ENCODE measurements at regions of chr2 and their contacts with region 1.

Region 1: DNA sequence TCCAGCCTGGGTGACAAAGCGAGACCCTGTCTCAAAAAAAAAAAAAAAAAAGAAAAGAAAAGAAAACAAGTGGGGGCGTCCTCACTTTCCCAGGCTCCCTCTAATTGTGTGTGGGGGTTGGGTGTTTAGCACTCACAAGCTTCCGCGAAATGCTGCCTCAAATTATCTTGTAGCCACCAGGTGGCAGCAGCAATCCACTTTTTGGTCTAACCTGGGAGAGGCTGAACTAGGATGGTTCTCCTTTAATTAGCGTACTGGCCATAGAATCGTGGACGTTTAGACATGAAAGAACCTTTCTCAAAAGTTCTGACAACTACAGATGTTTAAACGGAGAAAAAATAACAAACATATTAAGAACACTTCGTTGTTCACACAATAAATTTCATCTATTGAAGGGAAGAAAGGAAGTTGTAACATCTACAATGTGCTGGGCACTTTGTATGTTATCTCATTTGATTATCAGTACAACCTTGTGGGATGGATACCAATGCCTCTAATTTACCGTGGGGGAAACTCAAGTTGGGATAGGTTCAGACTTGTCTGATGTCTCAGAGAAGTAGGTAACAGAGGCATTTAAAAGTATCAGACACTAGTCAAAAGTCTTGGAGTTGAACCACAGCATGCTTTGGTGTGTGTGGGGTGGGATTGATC is 122.7 kb upstream of the NABP1 start:
- DNase-seq: peak; percentile 40 to 78 (median 66)
- ATAC-seq: peak; percentile 89
- H3K4me3 ChIP-seq: no peak overlapping the region
- H3K4me3 Mint-ChIP-seq: peak overlapping the region in 4 of 10 donors; percentile 23 to 64 (median 43)
- H3K27ac ChIP-seq: no peak overlapping the region
- H3K27ac Mint-ChIP-seq: no peak overlapping the region
- H3K4me1 ChIP-seq: no peaks in the 10 kb centered on the region
- H3K4me1 Mint-ChIP-seq: peaks cover 0 to 5% (median 3%) of the 10 kb centered on the region in 7 donors
- H3K27me3 ChIP-seq: no peaks in the 10 kb centered on the region
- H3K27me3 Mint-ChIP-seq: peaks cover 13 to 34% (median 18%) of the 10 kb centered on the region in 5 donors

Region 2: GRCh38 chr2:191625016-191625415 is 69.8 kb after region 1 on chr2:
- CTCF ChIA-PET with region 1: no interaction called
- POLR2A ChIA-PET with region 1: no interaction called
- intact Hi-C with region 1: no loop called
- DNase-seq: peak in 6 of 9 donors; percentile 26 to 68 (median 64)
- ATAC-seq: peak; percentile 90
- H3K4me3 ChIP-seq: no peak overlapping the region
- H3K4me3 Mint-ChIP-seq: peak overlapping the region in 7 of 10 donors; percentile 7 to 52 (median 42)
- H3K27ac ChIP-seq: no peak overlapping the region
- H3K27ac Mint-ChIP-seq: peak overlapping the region in 8 of 9 donors; percentile 65 to 90 (median 82)
- H3K4me1 ChIP-seq: peaks cover 18 to 25% of the 10 kb centered on the region in 2 donors
- H3K4me1 Mint-ChIP-seq: peaks cover 32 to 77% (median 59%) of the 10 kb centered on the region in 7 donors
- H3K27me3 ChIP-seq: no peaks in the 10 kb centered on the region
- H3K27me3 Mint-ChIP-seq: peaks cover 0 to 2% (median 0%) of the 10 kb centered on the region in 5 donors

Region 3: DNA sequence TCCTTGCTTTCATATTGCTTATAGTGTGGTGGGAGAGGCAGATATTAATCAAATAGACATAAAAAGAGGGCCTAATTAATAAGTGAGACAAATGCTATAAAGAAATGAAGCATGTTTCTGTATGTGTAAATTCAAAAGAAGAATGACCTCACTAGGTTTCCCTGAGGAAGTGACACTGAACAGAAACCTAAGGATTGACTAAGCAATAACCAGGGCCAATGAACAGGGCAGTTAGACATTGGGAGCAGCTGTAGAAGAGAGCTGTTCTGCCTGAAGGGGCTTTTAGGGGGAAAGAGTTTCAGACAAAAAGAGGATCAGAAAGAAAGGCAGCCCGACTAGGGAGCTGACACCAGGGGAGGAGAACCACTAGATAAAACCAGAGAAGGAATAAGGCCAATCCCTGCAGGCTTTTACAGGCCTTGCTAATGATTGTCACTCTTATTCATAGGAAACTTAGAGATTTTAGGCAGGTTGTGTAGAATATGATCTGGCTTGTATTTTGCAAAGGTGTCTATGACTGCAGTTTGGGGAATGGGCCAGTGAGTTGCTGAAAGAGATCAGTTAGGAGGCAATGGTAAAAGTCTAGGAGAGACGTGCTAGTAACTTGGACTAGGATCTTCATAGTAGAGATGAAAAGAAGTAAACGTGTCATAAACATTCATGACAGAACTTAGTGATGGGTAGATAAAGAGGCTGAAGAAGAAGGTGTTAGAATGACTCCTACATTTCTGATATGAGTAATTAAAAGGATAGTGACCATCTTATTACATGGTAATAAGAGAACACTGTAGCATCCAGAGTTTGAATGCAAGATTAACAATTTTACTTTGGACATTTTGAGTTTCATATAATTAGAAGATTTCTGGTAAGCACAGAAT is 95.9 kb after region 1 on chr2:
- CTCF ChIA-PET with region 1: no interaction called
- POLR2A ChIA-PET with region 1: no interaction called
- intact Hi-C with region 1: no loop called
- DNase-seq: no peak
- ATAC-seq: peak; percentile 54
- H3K4me3 ChIP-seq: no peak overlapping the region
- H3K4me3 Mint-ChIP-seq: no peak overlapping the region
- H3K27ac ChIP-seq: no peak overlapping the region
- H3K27ac Mint-ChIP-seq: peak overlapping the region in 1 of 9 donors; percentile 19
- H3K4me1 ChIP-seq: no peaks in the 10 kb centered on the region
- H3K4me1 Mint-ChIP-seq: peaks cover 0 to 6% (median 0%) of the 10 kb centered on the region in 7 donors
- H3K27me3 ChIP-seq: no peaks in the 10 kb centered on the region
- H3K27me3 Mint-ChIP-seq: peaks cover 0 to 2% (median 0%) of the 10 kb centered on the region in 5 donors

Region 4: DNA sequence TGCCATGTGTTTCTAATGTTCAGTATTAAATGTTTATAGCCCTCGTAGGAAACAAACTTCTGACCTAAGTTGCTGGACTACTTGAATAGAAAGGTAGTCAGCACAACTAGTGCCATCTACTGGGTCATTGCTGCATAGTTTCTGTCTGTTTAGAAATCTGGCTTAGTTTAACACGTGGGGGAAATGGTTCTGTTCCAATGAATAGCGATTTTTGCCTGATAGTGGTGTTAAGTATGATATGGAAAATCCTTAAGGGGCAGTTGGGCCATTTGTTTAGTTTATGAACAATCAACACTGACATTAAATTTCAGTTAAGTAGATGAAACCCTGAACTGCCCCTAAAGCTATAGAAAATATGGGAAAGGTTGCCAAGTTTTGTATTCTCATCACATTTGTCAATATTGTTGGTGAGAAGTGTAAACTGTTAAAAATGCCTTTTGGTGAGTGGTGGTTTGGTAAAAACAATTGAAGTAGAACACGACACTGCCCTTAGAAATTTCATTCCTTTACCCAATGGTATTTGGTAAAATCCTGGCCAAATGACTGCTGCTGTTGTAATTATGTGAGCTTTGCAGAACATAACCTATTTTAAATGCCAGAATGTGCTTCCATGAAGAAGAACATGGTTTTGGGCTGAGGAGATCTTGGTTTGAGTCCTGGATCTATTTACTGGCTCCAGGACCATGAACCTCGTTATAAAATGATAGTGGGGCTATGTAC is 136.0 kb after region 1 on chr2:
- CTCF ChIA-PET with region 1: interaction called, 6 read pairs
- POLR2A ChIA-PET with region 1: no interaction called
- intact Hi-C with region 1: loop called (anchors 1 kb)
- DNase-seq: peak in 7 of 9 donors; percentile 44 to 69 (median 61)
- ATAC-seq: peak; percentile 93
- H3K4me3 ChIP-seq: no peak overlapping the region
- H3K4me3 Mint-ChIP-seq: no peak overlapping the region
- H3K27ac ChIP-seq: no peak overlapping the region
- H3K27ac Mint-ChIP-seq: peak overlapping the region in 5 of 9 donors; percentile 31 to 61 (median 44)
- H3K4me1 ChIP-seq: peaks cover 3 to 11% of the 10 kb centered on the region in 2 donors
- H3K4me1 Mint-ChIP-seq: peaks cover 8 to 28% (median 15%) of the 10 kb centered on the region in 7 donors
- H3K27me3 ChIP-seq: no peaks in the 10 kb centered on the region
- H3K27me3 Mint-ChIP-seq: no peaks in the 10 kb centered on the region

Region 5: DNA sequence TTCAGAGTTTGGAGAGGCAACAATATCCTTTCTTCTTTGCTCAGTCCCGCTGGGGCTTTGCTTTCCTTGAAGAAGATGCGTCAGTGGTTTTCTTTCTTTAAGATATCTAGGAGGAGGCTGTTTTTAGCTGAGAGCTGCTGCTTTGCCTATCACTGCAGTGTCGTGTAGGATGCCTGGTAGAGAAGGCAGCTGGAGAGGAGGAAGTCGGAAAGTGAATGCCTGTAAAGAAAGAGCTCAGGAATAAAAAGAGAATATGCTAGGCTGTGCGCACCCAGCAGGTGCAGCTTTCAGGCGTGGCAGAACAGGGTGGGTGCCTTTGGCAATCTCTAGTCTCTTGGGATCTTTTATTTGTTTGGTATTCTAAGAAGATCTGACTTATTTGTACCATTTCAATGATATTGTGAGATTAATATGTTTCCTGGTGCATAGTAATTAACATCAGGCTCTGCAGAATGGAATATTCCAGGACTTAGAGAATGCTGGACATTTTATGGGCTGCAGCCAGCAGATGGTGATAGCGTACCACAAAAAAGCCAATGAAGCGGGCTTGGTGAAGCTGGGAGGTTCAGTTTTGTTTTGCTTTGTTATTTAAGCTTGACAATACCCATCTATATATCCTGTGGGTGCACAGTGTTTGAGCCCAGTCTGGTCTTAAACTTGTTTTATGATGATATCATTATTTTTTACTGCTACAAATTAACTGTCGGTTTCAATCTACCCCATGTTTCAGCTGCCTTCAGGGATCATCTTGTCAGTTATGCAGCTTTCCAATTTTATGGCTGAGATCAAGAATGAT is 256.8 kb after region 1 on chr2:
- CTCF ChIA-PET with region 1: interaction called, 5 read pairs
- POLR2A ChIA-PET with region 1: no interaction called
- intact Hi-C with region 1: loop called in 1 of 2 experiments (anchors 1 kb)
- DNase-seq: peak in 5 of 9 donors; percentile 3 to 22 (median 11)
- ATAC-seq: peak; percentile 57
- H3K4me3 ChIP-seq: no peak overlapping the region
- H3K4me3 Mint-ChIP-seq: no peak overlapping the region
- H3K27ac ChIP-seq: no peak overlapping the region
- H3K27ac Mint-ChIP-seq: no peak overlapping the region
- H3K4me1 ChIP-seq: no peaks in the 10 kb centered on the region
- H3K4me1 Mint-ChIP-seq: no peaks in the 10 kb centered on the region
- H3K27me3 ChIP-seq: no peaks in the 10 kb centered on the region
- H3K27me3 Mint-ChIP-seq: peaks cover 4 to 34% (median 22%) of the 10 kb centered on the region in 5 donors

Region 6: GRCh38 chr2:192286093-192286701 is 731.0 kb after region 1 on chr2:
- CTCF ChIA-PET with region 1: no interaction called
- POLR2A ChIA-PET with region 1: no interaction called
- intact Hi-C with region 1: loop called (anchors 5 to 10 kb)
- DNase-seq: no peak
- ATAC-seq: no peak
- H3K4me3 ChIP-seq: no peak overlapping the region
- H3K4me3 Mint-ChIP-seq: no peak overlapping the region
- H3K27ac ChIP-seq: no peak overlapping the region
- H3K27ac Mint-ChIP-seq: no peak overlapping the region
- H3K4me1 ChIP-seq: no peaks in the 10 kb centered on the region
- H3K4me1 Mint-ChIP-seq: no peaks in the 10 kb centered on the region
- H3K27me3 ChIP-seq: no peaks in the 10 kb centered on the region
- H3K27me3 Mint-ChIP-seq: peaks cover 0 to 12% (median 0%) of the 10 kb centered on the region in 5 donors

Region 7: DNA sequence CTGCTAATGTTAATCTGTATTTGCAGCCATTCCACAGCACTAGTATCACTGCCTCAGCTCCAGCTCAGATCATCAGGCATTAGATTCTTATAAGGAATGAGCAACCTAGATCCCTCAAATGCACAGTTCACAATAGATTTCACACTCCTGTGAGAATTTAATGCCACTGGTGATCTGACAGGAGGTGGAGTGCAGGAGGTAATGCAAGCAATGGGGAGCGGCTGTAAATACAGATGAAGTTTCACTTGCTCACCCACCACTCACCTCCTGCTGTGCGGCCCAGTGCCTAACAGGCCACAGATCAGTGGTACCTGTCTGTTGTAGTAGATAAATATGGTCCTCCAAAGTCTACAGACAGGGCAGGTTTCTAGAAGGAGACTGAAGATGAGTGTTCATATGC is 737.3 kb after region 1 on chr2:
- CTCF ChIA-PET with region 1: no interaction called
- POLR2A ChIA-PET with region 1: no interaction called
- intact Hi-C with region 1: loop called (anchors 5 to 10 kb)
- DNase-seq: no peak
- ATAC-seq: no peak
- H3K4me3 ChIP-seq: no peak overlapping the region
- H3K4me3 Mint-ChIP-seq: no peak overlapping the region
- H3K27ac ChIP-seq: no peak overlapping the region
- H3K27ac Mint-ChIP-seq: no peak overlapping the region
- H3K4me1 ChIP-seq: no peaks in the 10 kb centered on the region
- H3K4me1 Mint-ChIP-seq: no peaks in the 10 kb centered on the region
- H3K27me3 ChIP-seq: no peaks in the 10 kb centered on the region
- H3K27me3 Mint-ChIP-seq: peaks cover 0 to 8% (median 0%) of the 10 kb centered on the region in 5 donors

Measured in naive thymus-derived CD4-positive, alpha-beta T cell (primary cell).